Heart left ventricle (tissue), 16 donors: ENCODE measurements at regions of chr6 and their contacts with region 1.

Region 1: GRCh38 chr6:21987501-21987957 is 309.3 kb downstream of the PRL start:
- DNase-seq: peak; percentile 68 to 83 (median 80)
- ATAC-seq: peak; percentile 96 to 99 (median 98)
- H3K4me3 ChIP-seq: peak overlapping the region in 9 of 12 donors; percentile 5 to 42 (median 27)
- H3K27ac ChIP-seq: peak overlapping the region in 11 of 12 donors; percentile 35 to 83 (median 74)
- H3K4me1 ChIP-seq: peaks cover 0 to 33% (median 15%) of the 10 kb centered on the region in 12 donors
- H3K27me3 ChIP-seq: no peaks in the 10 kb centered on the region
- CTCF ChIP-seq: no peak
- POLR2A ChIP-seq: no peak

Region 2: DNA sequence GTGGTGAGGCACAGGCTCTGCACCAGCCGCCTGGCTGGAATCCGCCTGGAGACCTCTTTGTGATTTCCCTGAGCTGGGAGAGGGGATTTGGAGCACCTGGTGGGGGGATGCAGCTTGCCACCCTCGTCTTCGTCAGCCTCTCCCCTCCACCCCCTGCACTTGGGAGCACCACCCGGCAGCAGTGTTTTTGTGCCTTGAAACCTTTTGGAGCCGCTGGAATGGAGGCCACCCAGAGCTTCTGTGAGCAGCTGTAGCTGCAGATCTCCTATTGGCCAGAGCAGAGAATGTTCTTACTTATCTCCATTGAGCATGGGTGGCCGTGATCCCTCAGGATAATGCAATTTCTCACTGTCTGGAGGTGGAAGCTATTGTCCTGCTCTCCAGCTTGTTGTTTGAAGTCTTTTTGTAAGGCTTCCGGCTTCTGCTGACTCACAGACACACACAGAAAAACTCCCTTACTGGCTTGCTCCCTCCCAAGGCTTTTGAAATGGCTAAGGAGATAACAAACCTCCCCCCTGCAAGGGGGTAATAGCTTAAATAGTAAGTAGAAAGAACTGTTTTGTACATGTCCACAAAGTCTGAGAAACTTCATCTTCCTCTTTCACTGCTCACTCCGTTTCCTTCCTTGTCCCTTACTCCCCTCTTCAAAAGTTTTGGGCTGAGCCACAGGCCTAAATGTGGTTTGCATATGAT is 38.1 kb after region 1 on chr6:
- intact Hi-C with region 1: loop called in 2 of 10 experiments (anchors 5 kb)
- DNase-seq: peak in 1 of 5 donors; percentile 12
- ATAC-seq: peak; percentile 42 to 89 (median 87)
- H3K4me3 ChIP-seq: no peak overlapping the region
- H3K27ac ChIP-seq: peak overlapping the region in 9 of 12 donors; percentile 2 to 79 (median 35)
- H3K4me1 ChIP-seq: peaks cover 0 to 45% (median 28%) of the 10 kb centered on the region in 12 donors
- H3K27me3 ChIP-seq: no peaks in the 10 kb centered on the region
- CTCF ChIP-seq: no peak
- POLR2A ChIP-seq: no peak

Region 3: GRCh38 chr6:22030730-22031619 is 43.4 kb after region 1 on chr6:
- intact Hi-C with region 1: loop called in 2 of 10 experiments (anchors 5 kb)
- DNase-seq: no peak
- ATAC-seq: no peak
- H3K4me3 ChIP-seq: no peak overlapping the region
- H3K27ac ChIP-seq: no peak overlapping the region
- H3K4me1 ChIP-seq: peaks cover 0 to 34% (median 18%) of the 10 kb centered on the region in 12 donors
- H3K27me3 ChIP-seq: no peaks in the 10 kb centered on the region
- CTCF ChIP-seq: no peak
- POLR2A ChIP-seq: no peak

Region 4: DNA sequence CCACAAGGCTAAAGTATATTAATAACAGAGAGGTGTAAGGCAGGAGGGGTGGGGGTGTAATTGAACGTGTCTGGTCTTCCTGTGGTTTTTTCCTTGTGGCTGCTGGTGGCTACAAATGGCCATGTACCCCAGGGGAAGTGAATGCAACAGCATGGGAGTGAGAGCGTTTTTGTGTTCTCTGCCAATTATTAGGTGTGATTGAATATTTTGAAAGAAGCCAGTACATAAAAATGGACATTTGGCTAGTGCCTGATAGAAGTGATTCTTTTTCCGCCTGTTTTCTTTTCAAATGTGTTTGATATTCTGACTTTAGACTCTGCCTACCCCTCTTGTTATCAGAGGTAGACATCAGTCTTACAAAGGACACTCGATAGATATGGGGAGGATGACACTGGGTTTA is 168.0 kb after region 1 on chr6:
- intact Hi-C with region 1: no loop called
- DNase-seq: no peak
- ATAC-seq: no peak
- H3K4me3 ChIP-seq: no peak overlapping the region
- H3K27ac ChIP-seq: no peak overlapping the region
- H3K4me1 ChIP-seq: peaks cover 0 to 1% (median 0%) of the 10 kb centered on the region in 12 donors
- H3K27me3 ChIP-seq: no peaks in the 10 kb centered on the region
- CTCF ChIP-seq: no peak
- POLR2A ChIP-seq: no peak